Colonic mucosa (tissue), 4 donors: ENCODE measurements at regions of chr2 and their contacts with region 1.

Region 1: DNA sequence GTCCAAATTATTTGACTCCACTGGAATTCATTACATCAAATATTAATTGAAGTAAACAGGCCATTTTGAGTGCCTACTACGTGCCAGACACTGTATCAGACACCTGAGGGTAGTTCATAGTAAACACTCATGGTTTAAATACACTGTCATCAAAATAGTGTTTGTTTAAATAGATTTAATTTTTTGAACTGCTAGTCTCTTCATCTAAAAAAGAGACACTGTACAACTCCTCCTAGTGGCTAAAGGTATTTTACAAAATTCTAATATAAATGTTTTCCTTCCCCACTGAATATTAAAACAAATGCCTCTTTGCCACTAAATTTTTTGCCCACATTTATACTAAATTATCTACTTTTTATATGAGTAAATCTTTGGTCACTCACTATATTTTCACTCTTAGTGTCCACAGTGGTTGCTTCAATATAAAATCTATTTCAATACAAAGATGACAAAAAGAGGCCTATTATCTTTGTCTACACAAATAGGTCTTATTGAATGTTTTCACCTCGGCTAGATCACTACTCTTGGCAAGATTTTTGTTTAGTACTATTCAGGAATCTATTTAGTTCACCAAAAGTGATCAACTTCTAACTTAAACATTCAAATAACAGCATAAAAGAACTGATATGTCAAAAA is 122.1 kb downstream of the TMEM247 start:
- DNase-seq: no peak
- H3K4me3 ChIP-seq: no peak overlapping the region
- H3K27ac ChIP-seq: no peak overlapping the region
- H3K4me1 ChIP-seq: no peaks in the 10 kb centered on the region
- H3K27me3 ChIP-seq: no peaks in the 10 kb centered on the region
- CTCF ChIP-seq: peak; percentile 29

Region 2: GRCh38 chr2:46241344-46241743 is 360.1 kb before region 1 on chr2:
- intact Hi-C with region 1: no loop called
- DNase-seq: no peak
- H3K4me3 ChIP-seq: no peak overlapping the region
- H3K27ac ChIP-seq: no peak overlapping the region
- H3K4me1 ChIP-seq: no peaks in the 10 kb centered on the region
- H3K27me3 ChIP-seq: no peaks in the 10 kb centered on the region
- CTCF ChIP-seq: no peak

Region 3: DNA sequence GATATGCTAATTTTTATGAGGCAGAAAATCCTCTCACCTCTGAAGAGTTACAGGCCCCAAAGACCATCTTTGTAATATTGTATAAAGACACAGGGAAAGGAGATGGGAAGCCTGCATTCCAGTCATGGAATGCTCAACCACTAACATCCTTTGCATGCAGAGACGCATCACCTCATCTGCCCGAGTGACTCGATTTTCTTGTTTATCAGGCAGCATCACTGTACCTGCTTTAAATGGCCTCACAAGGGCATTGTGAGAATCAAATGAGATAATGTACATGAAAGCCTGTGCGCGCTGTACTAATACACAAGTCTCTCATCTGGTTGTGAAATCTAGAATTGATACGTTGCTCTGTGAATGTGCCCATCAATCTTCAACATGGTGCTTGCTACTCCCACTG is 132.3 kb before region 1 on chr2:
- intact Hi-C with region 1: loop called (anchors 5 kb)
- DNase-seq: no peak
- H3K4me3 ChIP-seq: no peak overlapping the region
- H3K27ac ChIP-seq: no peak overlapping the region
- H3K4me1 ChIP-seq: no peaks in the 10 kb centered on the region
- H3K27me3 ChIP-seq: no peaks in the 10 kb centered on the region
- CTCF ChIP-seq: no peak